ENCODE measurements at regions of chr4 and their contacts with region 1.

Region 1: GRCh38 chr4:23039813-23040212 is 347.1 kb downstream of the GBA3 start:
- DNase-seq: no peak

Region 2: GRCh38 chr4:23015821-23016220 is 24.0 kb before region 1 on chr4:
- intact Hi-C with region 1: loop called in 1 of 2 experiments (anchors 1 kb)
- DNase-seq: no peak

Measured in posterior vena cava (tissue), 2 donors.